Activated B cell treated with CpG ODN at 0.5 μM for 24 hours (primary cell): ENCODE measurements at regions of chr14 and their contacts with region 1.

Region 1: GRCh38 chr14:32121948-32122347 is 44.8 kb downstream of the ARHGAP5 start:
- DNase-seq: no peak
- ATAC-seq: no peak
- H3K4me3 Mint-ChIP-seq: no peak overlapping the region
- H3K27ac Mint-ChIP-seq: no peak overlapping the region
- H3K4me1 Mint-ChIP-seq: peaks cover 5% of the 10 kb centered on the region
- H3K27me3 Mint-ChIP-seq: no peaks in the 10 kb centered on the region
- CTCF ChIP-seq: no peak

Region 2: DNA sequence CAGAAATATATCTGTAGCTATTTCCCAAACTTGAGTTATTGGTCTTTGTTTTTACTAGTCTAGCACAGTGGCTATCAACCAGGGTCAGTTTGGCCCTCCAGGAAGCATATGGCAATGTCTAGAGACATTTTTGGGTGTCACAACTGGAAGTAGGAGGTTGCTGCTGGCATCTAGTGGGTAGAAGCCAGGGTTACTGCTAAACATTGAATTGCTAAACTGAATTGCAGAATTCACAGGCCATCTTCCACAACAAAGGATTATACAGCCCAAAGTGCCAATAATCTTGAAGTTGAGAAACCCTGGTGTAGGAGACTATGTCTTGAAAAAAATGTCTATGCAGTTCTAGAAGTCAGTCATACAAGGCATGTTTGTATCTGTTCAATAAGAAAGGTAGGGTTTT is 17.1 kb before region 1 on chr14:
- CTCF ChIA-PET with region 1: no interaction called
- POLR2A ChIA-PET with region 1: no interaction called
- intact Hi-C with region 1: loop called (anchors 2 kb)
- DNase-seq: no peak
- ATAC-seq: no peak
- H3K4me3 Mint-ChIP-seq: no peak overlapping the region
- H3K27ac Mint-ChIP-seq: no peak overlapping the region
- H3K4me1 Mint-ChIP-seq: peaks cover 29% of the 10 kb centered on the region
- H3K27me3 Mint-ChIP-seq: no peaks in the 10 kb centered on the region
- CTCF ChIP-seq: no peak

Region 3: DNA sequence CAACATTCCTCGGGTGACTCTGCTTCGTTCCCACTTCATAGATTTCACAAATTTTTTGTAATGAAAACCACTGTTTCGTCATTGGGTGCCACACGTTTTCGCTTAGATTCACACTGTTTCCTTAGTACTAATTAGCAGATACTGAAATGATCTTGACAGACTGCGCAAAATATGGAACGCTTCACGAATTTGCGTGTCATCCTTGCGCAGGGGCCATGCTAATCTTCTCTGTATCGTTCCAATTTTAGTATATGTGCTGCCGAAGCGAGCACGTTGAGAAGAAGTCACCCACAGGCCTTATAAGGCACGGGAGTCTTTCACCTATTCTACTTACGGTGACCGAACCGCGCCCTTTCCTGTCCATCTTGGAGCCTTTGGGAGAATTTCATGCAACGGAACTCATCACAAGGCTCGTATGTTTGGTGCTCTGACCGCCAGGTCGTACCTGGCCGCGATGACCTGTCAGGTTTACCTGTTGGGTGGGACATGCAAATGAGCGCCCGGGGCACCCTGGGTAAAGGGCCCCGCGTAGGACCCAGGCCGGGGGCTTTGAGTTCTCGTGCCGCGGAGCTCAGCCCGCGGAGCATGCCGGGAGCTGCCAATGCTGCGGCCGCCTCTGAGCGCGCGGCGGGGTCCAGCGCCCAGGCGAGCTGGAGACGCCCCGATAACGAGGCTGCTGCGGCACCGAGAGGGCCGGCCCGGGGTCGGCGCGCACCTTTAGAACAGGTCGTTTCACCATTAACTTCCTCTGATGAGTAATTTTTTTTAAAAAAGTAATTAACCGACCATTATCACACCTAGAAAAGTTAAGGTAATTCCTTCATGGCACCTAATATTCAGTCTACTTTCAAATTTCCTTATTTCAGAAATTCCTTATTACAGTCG is 81.3 kb after region 1 on chr14 and contains the start of gene RNU6-8:
- CTCF ChIA-PET with region 1: no interaction called
- POLR2A ChIA-PET with region 1: no interaction called
- intact Hi-C with region 1: no loop called
- DNase-seq: peak; percentile 84
- ATAC-seq: peak; percentile 78
- H3K4me3 Mint-ChIP-seq: peak within 1 kb of the TSS; percentile 87
- H3K27ac Mint-ChIP-seq: peak within 1 kb of the TSS; percentile 100
- H3K4me1 Mint-ChIP-seq: peaks cover 51% of the 10 kb centered on the region
- H3K27me3 Mint-ChIP-seq: no peaks in the 10 kb centered on the region
- CTCF ChIP-seq: no peak
- total RNA-seq, gene RNU6-8: not detected in 2 replicates